HEK293 (cell line): ENCODE measurements at regions of chr7 and their contacts with region 1.

Region 1: DNA sequence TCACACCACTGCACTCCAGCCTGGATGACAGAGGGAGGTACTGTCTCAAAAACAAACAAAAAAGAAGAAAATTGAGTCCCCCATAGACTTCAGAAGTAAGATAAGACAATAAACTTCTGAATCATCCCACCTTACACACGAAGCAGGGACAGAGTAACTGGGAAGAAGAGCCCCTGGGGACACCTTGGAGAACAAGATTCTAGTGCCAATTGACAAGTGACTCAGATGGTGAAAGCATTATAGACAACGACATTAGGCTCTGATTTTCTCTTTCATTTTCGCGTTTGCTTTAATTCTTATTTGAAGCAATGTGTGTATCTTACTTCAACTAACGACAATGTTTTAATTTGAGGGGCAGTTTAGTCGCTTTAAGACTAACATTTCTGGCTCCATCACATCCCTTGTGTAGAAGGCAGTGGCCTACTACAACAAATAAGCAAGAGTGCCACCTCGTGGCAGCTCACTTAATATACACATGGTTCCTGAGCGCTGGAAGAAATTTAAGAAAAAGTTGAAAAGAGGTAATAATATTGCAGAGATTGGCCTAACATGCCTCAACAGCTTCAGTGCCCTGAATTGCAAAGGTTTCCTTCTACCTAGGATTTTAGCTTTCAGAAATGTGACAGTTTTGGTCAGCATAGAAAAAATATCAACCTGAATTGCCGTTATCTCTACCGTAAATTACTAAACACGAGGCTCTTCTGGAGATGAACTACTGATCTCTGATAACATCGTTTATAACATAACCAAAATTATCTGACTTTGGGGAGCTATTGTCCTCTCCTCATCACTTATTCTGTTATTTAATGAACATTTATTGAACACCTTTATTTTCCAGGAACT is 36.7 kb downstream of the ASNS start:
- H3K4me3 ChIP-seq: no peak overlapping the region
- H3K27ac ChIP-seq: no peak overlapping the region
- H3K4me1 ChIP-seq: no peaks in the 10 kb centered on the region
- CTCF ChIP-seq: peak; percentile 50; the same call in 1 of the 2 replicates

Region 2: DNA sequence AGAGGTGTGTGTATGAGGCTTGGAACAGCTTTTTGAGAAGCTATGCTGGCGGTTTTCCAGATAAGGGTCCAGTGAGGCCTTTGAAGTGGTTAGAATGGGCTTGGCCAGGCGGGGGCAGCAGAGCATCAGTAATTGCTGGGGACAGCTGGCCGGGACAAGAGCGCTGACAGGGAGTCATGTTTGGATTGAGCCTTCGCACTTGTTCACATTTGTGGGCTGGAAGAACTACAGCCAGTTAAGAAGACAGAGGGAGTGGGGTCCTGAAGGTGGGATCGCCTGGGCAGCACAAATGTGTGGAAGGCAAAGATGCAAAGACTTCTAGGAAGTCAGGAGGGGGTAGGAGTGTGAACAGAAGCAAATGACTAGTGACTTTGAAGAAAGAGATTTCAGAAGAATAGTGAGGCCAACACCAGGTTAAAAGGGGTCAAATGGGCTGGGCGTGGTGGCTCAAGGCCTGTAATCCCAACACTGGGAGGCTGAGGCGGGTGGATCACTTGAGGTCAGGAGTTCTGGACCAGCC is 730.7 kb before region 1 on chr7:
- CTCF ChIA-PET with region 1: interaction called, 25 read pairs
- POLR2A ChIA-PET with region 1: no interaction called
- H3K4me3 ChIP-seq: no peak overlapping the region
- H3K27ac ChIP-seq: no peak overlapping the region
- H3K4me1 ChIP-seq: no peaks in the 10 kb centered on the region
- CTCF ChIP-seq: peak; percentile 83

Region 3: DNA sequence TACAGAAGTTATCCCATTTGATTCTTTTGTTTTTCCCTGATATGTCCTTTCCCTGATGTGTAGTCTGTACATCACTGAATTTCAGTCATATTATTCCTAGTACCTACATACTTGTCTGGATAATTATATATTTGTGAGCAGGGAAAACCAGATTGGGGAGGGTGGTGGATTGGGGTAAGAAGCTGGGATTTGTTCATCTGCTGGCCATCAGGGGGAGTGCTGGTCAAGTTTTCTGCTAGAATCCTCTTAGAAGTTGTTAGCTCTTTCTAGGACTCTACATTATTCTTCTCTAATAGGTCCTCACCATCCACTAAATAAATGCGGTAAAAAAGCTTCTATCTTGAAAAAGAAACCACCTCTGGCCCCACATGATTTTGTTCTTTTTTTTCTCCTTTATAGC is 336.3 kb before region 1 on chr7:
- CTCF ChIA-PET with region 1: interaction called, 10 read pairs
- POLR2A ChIA-PET with region 1: no interaction called
- H3K4me3 ChIP-seq: no peak overlapping the region
- H3K27ac ChIP-seq: no peak overlapping the region
- H3K4me1 ChIP-seq: no peaks in the 10 kb centered on the region
- CTCF ChIP-seq: no peak

Region 4: GRCh38 chr7:97819161-97819560 is 16.4 kb before region 1 on chr7:
- CTCF ChIA-PET with region 1: interaction called, 10 read pairs
- POLR2A ChIA-PET with region 1: no interaction called
- H3K4me3 ChIP-seq: no peak overlapping the region
- H3K27ac ChIP-seq: no peak overlapping the region
- H3K4me1 ChIP-seq: no peaks in the 10 kb centered on the region
- CTCF ChIP-seq: no peak

Region 5: GRCh38 chr7:97845622-97846203 is 10.2 kb after region 1 on chr7:
- CTCF ChIA-PET with region 1: interaction called, 23 read pairs
- POLR2A ChIA-PET with region 1: no interaction called
- H3K4me3 ChIP-seq: no peak overlapping the region
- H3K27ac ChIP-seq: no peak overlapping the region
- H3K4me1 ChIP-seq: no peaks in the 10 kb centered on the region
- CTCF ChIP-seq: no peak

Region 6: DNA sequence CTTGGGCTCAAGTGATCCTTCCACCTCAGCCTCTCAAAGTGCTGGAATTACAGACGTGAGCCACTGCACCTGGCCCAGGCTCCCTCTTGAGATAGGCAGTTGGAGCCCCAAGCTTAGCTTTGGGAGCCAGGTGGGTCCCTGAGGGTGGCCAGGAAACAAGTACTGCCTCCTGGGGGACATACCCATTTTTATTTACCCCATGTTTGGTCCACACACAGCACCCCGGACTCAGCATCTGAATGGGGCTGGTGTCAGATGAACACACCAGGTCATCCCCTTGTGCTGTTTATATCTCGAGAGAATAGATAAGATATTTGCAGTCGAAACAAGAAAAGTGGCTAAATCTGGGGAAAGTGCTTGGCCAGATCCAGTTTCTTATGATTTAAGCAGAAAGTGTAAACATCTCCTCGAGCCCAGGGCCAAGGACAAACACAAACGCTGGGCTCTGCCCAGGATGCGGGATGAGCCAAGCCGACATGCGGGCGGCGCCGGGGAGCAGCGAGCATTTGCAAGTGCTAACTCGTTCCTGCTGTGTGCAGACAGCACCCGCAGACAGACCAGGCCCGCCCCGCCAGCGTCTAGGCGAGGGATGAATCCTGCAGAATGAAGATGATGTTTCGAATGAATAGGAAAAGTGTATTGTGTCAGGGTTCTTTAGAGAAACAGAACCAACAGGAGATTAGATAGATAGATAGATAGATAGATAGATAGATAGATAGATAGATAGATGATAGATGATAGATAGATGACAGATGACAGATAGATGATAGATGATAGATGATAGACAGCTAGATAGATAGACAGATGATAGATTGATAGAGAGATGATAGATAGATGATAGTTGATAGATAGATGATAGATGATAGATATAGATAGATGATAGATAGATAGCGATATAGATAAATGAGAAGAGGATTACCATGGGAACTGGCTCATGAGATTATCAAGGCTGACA is 198.8 kb after region 1 on chr7:
- CTCF ChIA-PET with region 1: no interaction called
- POLR2A ChIA-PET with region 1: no interaction called
- H3K4me3 ChIP-seq: no peak overlapping the region
- H3K27ac ChIP-seq: no peak overlapping the region
- H3K4me1 ChIP-seq: no peaks in the 10 kb centered on the region
- CTCF ChIP-seq: no peak